HEK293 (cell line): ENCODE measurements at regions of chr16 and their contacts with region 1.

Region 1: GRCh38 chr16:28943281-28943680 is 7.5 kb upstream of the NFATC2IP start:
- H3K4me3 ChIP-seq: no peak overlapping the region
- H3K27ac ChIP-seq: no peak overlapping the region
- H3K4me1 ChIP-seq: no peaks in the 10 kb centered on the region
- CTCF ChIP-seq: no peak

Region 2: DNA sequence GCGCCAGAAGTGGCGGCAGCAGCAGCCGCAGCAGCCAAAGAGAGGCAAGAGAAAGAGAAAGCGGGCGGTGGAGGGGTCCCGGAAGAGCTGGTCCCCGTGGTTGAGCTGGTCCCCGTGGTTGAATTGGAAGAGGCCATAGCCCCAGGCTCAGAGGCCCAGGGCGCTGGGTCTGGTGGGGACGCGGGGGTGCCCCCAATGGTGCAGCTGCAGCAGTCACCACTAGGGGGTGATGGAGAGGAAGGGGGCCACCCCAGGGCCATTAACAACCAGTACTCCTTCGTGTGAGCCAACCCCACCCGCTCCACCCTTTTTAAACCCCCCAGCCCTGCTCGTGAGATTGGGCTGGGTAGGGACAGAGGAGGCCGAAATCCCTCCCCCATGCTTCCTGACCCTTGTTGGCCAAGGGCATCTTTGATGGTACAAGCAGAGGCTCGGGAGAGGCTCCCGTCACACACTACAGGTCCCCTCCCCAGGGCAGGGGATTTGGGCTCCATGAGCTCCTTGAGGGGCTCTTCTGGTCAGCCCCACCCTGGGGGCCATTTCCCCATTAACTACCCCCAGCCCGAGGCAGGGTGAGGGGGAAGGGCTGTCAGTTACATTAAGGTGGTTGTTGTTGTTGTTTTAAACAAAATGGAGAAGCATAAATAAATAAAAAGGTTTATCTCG is 69.6 kb before region 1 on chr16:
- CTCF ChIA-PET with region 1: interaction called, 19 read pairs
- POLR2A ChIA-PET with region 1: interaction called, 11 read pairs
- H3K4me3 ChIP-seq: no peak overlapping the region
- H3K27ac ChIP-seq: no peak overlapping the region
- H3K4me1 ChIP-seq: peaks cover 2% of the 10 kb centered on the region
- CTCF ChIP-seq: peak; percentile 78

Region 3: DNA sequence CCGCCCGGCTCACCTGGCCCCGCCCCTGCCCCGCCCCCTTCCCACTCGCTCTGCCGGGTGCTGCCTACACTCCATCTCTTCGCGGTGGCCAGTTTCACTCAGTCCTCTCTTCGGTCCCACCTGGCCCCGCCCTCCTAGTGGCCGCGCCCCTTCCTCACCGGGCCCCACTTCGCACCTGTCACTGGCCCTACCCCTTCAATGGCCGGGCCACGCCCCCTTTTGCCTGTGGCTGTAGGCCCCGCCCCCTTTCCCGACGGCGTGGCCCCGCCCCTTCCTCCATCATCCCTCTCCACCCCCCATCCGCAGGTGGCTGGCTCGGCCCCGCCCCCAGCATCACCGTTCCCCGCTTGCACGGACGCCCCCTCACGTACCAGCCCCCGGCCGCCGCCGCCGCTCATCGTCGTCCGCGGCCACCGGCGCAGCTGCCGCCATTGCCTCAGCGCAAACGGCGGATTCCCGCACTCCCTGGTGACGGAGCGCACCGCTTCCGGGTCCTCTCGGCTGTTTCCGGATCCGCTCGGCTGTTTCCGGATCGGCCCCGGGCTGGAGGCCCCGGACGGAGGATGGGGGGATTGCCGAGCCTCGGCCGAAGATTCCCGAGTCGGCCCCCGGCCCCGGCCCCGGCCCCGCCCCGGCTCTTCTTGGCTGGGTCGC is 18.4 kb before region 1 on chr16 and contains the start of gene RABEP2:
- CTCF ChIA-PET with region 1: interaction called, 22 read pairs
- POLR2A ChIA-PET with region 1: no interaction called
- H3K4me3 ChIP-seq: peak within 1 kb of the TSS; percentile 91
- H3K27ac ChIP-seq: peak within 1 kb of the TSS; percentile 95
- H3K4me1 ChIP-seq: 0 out of 2 replicates have a peak, but pooled peaks cover 4% of the 10 kb centered on the region
- CTCF ChIP-seq: no peak